Sigmoid colon (tissue), 7 donors: ENCODE measurements at regions of chr15 and their contacts with region 1.

Region 1: DNA sequence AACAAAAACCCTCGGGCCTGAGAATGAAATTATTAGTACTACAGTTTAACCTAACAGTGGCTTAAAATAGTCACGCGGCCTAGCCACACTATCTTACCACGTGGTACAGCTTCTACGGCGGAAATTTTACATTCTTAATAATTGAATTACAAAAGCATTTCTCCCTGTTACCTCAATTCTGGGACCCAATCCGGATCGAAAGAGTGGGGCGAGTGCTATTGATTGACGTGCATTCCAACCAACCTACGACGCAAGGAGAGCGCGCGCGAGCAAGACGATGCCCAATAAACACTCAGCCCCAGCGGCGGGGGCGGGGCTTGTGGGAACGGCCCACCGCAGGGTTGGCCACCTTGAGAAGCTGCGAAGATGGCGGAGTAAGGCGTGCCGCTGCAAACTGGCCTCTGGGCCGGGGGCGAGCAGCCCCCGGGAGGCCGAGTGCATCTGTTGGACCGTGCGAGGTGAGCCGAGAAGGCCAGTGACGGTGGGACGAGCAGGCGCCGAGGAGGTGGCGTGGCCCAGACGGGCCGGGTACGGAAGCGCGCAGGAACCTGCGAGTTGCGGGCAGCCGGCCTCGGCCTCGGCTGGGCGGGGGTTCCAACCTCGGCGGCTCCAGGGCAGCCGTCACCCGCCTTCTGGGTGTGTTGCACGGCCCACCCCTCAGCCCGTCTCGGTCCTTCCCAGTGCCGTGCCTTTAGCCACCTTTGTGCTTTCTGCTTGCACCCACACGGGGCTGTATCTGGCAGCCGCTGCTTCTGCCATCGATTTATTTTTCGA is 48.6 kb downstream of the OIP5 start:
- DNase-seq: peak; percentile 99
- H3K4me3 ChIP-seq: peak overlapping the region; percentile 80 to 98 (median 92)
- H3K27ac ChIP-seq: peak overlapping the region; percentile 90 to 96 (median 92)
- H3K4me1 ChIP-seq: peaks cover 0 to 29% (median 22%) of the 10 kb centered on the region in 4 donors
- H3K27me3 ChIP-seq: no peaks in the 10 kb centered on the region
- CTCF ChIP-seq: no peak
- EP300 ChIP-seq: peak in 1 of 4 donors; percentile 9
- POLR2A ChIP-seq: peak; percentile 82 to 90

Region 2: DNA sequence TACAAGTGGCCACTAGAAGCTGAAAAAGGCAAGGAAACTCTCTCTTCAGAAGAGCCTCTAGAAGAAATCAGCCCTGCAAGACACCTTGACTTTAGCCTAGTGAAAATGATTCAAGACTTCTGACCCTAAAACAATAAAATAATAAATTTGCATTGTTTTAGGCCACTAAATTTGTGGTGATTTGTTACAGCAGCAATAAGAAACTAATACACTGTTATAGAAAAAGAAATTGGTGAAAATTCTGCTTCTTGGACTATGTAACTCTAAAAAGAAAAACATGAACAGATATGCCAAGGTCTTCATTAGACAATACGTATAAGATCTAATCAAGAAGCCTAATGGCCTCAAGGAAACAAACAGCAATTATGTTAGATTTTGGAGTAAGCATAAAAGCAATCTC is 89.4 kb before region 1 on chr15:
- intact Hi-C with region 1: no loop called
- DNase-seq: no peak
- H3K4me3 ChIP-seq: no peak overlapping the region
- H3K27ac ChIP-seq: no peak overlapping the region
- H3K4me1 ChIP-seq: peaks cover 0 to 6% (median 0%) of the 10 kb centered on the region in 4 donors
- H3K27me3 ChIP-seq: no peaks in the 10 kb centered on the region
- CTCF ChIP-seq: no peak
- EP300 ChIP-seq: no peak
- POLR2A ChIP-seq: no peak

Region 3: DNA sequence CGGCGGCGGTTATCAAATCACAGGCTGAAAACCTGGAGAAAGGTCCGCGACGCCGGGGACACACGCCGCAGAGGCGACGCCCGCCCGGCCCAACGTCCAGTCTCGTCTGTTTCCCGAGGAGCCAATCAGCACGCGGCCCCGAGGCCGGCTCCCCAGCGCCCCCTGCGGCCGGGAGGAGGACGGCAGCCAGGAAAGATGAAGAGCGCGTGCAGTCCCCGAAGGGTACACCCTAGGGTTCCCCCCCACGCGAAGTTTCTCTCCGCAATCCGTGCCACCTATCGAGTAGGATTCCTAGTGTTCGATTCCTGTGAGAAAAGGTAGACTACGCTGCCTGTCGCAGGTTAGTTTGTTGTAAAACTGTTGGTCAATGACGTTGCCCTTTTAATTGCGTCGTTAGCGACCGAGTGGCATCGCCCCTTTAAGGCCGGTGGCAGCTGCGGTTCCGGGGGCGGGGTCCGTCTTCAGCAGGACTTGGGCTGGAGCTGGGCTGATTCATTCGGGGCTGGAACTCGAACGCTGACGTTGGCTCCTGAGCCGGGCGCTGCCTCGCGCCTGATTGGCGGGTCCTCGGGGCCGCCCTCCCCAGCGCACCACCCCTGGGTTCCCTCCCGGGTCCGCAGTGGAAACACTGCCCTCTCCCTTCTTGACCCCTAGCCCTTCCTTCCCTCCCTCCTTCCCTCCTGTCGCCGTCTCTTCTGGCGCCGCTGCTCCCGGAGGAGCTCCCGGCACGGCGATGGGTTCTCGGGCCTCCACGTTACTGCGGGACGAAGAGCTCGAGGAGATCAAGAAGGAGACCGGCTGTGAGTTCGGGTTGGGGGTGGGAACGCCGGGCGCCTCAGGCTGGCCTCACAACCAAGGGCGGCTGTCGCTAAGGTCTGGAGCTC is 52.9 kb before region 1 on chr15 and contains the starts of genes CHP1 and EXD1:
- intact Hi-C with region 1: loop called (anchors 1 kb)
- DNase-seq: peak; percentile 99
- H3K4me3 ChIP-seq: peak within 1 kb of the TSS; percentile 75 to 78 (median 78)
- H3K27ac ChIP-seq: peak within 1 kb of the TSS; percentile 91 to 93 (median 91)
- H3K4me1 ChIP-seq: peaks cover 0 to 32% (median 30%) of the 10 kb centered on the region in 4 donors
- H3K27me3 ChIP-seq: no peaks in the 10 kb centered on the region
- CTCF ChIP-seq: peak; percentile 90 to 98 (median 96)
- EP300 ChIP-seq: peak in 2 of 4 donors; percentile 6 to 37
- POLR2A ChIP-seq: peak; percentile 85 to 86
- total RNA-seq, gene CHP1: 101 to 118 (median 105) TPM
- total RNA-seq, gene EXD1: not detected

Region 4: GRCh38 chr15:41304149-41304770 is 20.4 kb after region 1 on chr15:
- intact Hi-C with region 1: no loop called
- DNase-seq: no peak
- H3K4me3 ChIP-seq: no peak overlapping the region
- H3K27ac ChIP-seq: no peak overlapping the region
- H3K4me1 ChIP-seq: no peaks in the 10 kb centered on the region
- H3K27me3 ChIP-seq: no peaks in the 10 kb centered on the region
- CTCF ChIP-seq: no peak
- EP300 ChIP-seq: no peak
- POLR2A ChIP-seq: no peak

Region 5: GRCh38 chr15:41331833-41332787 is 48.3 kb after region 1 on chr15 and contains the start of gene OIP5:
- intact Hi-C with region 1: loop called (anchors 5 kb)
- DNase-seq: peak; percentile 99
- H3K4me3 ChIP-seq: peak within 1 kb of the TSS; percentile 71 to 93 (median 74)
- H3K27ac ChIP-seq: peak within 1 kb of the TSS; percentile 59 to 77 (median 74)
- H3K4me1 ChIP-seq: peaks cover 0 to 17% (median 14%) of the 10 kb centered on the region in 4 donors
- H3K27me3 ChIP-seq: no peaks in the 10 kb centered on the region
- CTCF ChIP-seq: peak; percentile 24 to 85 (median 74)
- EP300 ChIP-seq: no peak
- POLR2A ChIP-seq: no peak
- total RNA-seq, gene OIP5: 0.71 to 1.1 TPM in 2 of 4 donors, not detected in the others